AG04449 (cell line): ENCODE measurements at regions of chr11 and their contacts with region 1.

Region 1: DNA sequence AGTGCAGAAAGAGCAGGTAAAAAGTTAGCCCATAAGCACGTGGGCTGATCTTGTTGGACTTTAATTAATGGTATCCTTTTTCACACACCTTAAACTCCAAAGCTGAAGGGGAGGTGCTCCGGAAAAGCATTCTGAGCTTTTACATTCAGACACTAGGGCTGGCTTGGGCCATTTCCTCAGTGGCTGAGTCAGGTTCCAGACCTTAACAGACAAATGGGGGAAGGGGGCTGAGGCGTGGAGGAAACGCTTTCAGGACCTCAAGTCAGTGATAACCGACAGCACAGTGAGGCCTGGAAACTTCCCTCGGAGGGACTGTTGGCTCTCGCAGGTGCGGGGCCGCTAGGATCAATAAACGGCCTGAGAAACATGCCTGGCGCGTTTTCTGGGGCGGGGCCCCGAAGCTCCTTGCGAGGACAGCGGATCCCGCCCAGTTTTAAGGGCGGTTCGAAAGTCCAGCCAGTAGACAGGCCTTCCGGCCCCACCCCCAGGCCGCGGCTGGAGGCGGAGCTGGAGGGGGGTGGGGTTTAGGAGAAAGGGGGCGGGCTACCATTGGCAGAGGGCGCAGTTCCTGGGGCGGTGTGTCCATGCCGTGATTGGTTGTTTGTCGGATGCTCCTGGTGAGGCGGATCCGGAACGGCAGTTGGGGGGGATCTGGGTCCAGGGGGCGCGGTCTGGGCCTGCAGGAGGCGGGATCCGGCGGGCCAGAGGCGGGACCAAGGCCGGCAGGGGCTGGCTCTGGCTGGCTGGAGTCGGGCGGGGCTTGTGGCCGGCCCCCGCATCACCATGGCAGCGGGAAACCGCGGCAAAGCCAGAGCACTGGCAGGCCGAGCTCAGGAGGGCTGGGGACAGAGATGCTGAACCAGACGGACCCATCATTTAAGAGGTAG is 8.0 kb downstream of the C11orf52 start:
- DNase-seq: peak; percentile 85
- H3K4me3 ChIP-seq: peak overlapping the region; percentile 49
- CTCF ChIP-seq: no peak

Region 2: DNA sequence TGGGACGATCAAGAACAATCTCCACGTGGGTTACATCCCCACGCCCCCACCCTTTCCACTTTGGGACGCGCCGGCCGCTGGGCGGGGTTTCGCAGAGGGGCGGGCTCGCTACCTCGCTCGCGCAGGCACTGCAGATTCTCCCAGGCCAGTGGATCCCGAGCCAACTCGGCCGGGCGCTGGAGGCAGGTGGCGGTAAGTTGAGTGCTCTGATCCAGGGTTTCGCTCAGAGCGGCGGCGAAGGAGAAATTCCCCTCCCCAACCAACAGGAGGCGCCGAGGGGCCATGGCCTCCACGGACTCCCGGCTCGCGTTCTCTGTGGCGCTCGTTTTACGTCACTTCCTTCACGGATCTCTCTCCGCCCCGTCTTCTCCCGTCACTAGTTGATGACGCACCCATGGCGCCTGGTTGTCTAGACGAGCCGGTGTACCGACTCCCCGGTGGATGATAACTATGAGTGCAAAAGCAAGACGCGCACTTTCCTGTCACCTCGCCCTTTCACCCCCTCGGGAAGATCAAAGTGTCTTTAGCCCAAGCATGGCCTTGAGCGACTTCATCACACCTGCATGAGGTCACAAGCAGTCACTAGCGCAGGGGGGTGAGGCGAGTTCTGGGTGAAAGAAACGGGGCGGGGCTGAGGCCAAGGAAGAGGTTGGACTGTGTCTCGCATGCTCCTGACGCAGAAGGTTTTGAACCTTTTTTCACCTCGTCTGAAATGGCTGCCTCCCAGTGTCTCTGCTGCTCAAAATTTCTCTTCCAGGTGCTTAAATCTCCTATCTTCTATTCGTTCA is 47.7 kb before region 1 on chr11 and contains the starts of genes CFAP68 and FDXACB1:
- CTCF ChIA-PET with region 1: interaction called, 18 read pairs
- POLR2A ChIA-PET with region 1: no interaction called
- DNase-seq: peak; percentile 76
- H3K4me3 ChIP-seq: peak within 1 kb of the TSS; percentile 94
- CTCF ChIP-seq: peak; percentile 95

Region 3: GRCh38 chr11:111911563-111912401 is 15.0 kb before region 1 on chr11 and contains the start of gene CRYAB:
- CTCF ChIA-PET with region 1: interaction called, 13 read pairs
- POLR2A ChIA-PET with region 1: interaction called, 10 read pairs
- DNase-seq: peak; percentile 95
- H3K4me3 ChIP-seq: peak within 1 kb of the TSS; percentile 50
- CTCF ChIP-seq: no peak

Region 4: DNA sequence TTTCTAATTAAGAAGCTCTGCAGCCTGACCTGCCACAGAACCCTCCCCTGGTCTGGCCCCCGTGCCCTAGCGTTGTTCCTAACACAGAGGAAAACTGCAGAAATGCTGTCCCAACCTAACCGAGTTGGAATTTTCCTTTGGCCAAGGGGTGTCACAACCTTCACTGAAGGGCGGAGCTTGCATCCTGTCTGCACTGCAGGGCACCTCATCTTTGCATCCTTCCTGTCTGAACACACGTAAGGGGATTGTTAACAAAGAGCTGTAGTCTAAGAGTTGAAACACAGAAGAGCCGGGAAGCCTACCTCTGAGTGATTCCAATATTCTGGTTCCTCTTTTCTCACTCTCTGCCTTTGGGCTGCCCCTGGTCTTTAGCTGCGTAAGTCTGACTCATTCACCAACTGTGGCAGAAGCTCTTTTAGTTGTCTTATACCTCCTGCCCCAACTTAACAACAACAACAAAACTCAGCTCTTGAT is 12.0 kb after region 1 on chr11:
- CTCF ChIA-PET with region 1: interaction called, 110 read pairs
- POLR2A ChIA-PET with region 1: interaction called, 9 read pairs
- DNase-seq: no peak
- H3K4me3 ChIP-seq: peak overlapping the region; percentile 69
- CTCF ChIP-seq: no peak